AG04450 (cell line): ENCODE measurements at regions of chr17 and their contacts with region 1.

Region 1: DNA sequence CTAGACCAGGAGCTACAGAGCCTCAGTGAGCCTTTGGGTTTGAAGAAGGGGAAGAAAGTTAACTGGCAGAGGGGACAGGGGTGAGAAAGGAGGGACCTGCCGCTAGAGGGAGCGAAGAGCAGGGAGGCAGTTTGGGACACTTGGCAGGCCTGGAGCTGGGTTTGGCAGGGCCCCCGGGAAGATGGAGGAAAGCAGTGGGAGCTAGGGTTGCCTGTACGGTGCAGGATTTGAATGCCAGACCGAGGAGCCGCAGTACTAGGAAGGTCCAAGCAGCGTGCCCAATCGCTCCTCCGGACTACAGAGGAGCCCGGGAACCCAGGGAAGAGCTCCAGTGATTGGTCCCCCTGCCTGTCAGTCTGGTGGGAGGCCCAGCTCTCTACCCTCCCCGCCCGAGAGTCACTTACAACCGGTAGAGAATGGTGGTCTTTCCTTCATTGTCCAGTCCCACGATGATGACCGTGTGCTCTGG is 1.3 kb downstream of the ARL5C start:
- DNase-seq: peak; percentile 76
- H3K4me3 ChIP-seq: peak overlapping the region; percentile 63
- H3K27ac ChIP-seq: no peak overlapping the region
- H3K27me3 ChIP-seq: peaks cover 32% of the 10 kb centered on the region
- CTCF ChIP-seq: peak; percentile 87

Region 2: DNA sequence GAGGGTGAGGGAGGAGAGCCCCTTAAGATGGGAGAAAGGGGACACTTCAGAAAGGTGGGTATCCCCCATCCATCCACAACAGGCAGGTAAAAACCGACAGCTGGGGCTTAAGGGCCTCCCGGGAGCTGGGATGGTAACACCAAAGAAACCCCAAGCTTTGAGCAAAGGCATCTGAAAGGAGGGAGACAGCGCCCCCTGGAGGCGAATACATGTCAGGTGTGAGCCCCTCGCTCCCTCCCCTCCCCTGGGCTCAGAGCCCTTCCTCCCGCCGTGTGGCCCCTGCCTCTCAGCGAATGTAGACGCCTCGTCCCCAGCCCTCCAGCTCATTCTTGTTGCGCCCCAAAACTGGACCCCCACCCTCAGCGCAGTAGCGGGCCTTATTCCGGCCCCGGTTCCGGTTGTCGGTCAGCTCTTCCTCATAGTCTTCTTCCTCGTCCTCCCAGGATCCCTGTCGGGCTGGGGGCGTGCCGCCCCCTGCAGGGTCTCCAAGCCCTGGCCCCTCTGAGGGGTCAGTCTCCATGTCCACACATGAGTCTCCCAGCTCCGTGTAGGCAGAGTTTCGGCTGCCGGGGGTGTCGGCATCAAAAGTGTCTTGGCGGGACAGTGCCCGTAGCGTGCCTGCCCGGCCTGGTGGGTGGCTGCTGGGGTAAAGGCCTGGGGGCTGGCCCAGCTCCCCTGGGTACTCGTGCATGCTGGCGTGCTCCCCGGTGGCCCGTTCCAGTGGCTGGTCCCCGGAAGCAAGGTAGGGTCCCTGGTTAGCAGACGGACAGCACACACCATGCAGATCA is 10.4 kb after region 1 on chr17:
- CTCF ChIA-PET with region 1: interaction called, 54 read pairs
- POLR2A ChIA-PET with region 1: interaction called, 3 read pairs
- DNase-seq: no peak
- H3K4me3 ChIP-seq: no peak overlapping the region
- H3K27ac ChIP-seq: no peak overlapping the region
- H3K27me3 ChIP-seq: no peaks in the 10 kb centered on the region
- CTCF ChIP-seq: peak; percentile 78

Region 3: DNA sequence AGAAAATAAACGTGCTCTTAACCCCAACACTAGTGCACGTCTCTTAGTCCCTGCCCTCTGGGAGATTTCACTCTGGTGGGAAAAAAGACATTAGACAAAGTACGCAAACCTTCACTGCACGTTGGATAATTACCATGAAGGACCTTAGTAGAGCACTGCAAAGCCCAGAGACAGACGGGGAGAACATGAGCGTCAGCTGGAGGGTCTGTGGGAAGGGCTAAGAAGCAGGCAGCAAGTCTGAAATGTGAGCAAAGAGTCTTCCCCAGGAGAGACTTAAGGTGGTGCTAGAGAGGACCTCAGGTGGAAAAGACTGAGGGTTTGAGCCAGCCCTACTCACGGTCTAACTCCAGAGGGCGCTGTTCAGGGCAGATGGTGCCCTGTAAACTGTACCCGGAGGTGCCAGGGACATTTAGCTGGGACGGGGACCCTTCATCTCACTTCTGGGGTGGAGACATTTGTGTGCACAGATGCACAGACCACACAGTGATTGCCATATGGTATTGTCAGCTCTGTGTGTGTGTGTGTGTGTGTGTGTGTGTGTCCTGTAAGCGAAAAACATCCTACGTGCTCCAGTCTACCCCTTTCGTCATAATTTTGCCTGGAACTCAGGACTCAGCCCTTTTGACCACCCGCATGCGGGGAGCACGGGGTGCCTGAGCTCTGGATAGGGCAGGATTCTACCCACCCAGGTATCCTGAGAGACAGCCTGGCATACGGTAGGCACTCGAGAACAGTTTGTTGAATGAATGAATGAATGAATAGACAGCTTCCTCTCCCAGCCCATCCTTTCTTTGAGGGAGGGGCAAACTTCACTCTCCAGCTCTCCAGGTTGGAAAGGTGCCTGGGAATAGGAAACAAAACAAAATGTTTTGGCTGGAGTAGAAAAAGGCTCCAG is 71.1 kb after region 1 on chr17:
- CTCF ChIA-PET with region 1: interaction called, 17 read pairs
- POLR2A ChIA-PET with region 1: no interaction called
- DNase-seq: no peak
- H3K4me3 ChIP-seq: no peak overlapping the region
- H3K27ac ChIP-seq: no peak overlapping the region
- H3K27me3 ChIP-seq: no peaks in the 10 kb centered on the region
- CTCF ChIP-seq: peak; percentile 69

Region 4: DNA sequence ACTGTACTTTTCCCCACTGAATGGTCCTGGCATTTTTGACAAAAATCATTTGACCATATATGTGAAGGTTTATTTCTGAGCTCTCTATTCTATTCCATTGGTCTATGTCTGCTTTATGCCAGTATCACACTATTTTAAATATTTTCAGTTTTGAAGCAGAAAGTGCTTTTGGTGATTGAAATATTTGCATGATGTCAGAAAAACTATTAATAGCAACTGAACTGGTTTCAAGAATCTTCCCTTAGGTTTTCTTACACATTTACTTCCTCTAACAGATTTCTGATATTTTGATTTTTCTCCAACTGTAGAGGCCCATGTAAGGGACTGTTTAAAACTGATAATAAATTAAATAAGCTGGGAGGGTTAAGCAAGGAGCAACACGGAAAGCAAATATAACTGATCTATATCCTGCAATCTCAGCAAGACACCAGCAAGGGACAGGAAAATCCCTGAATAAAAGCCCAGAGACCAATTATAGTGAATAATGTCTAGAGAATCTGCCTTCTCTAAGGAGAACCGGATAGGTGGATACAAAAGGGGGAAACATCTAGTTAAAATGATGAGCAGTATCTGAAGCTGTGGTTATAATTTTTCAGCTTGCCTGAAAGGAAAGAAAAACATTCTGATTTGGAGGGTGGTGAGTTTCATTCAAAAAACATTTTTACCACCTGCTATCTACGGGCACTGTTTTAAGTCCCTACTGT is 142.0 kb after region 1 on chr17:
- CTCF ChIA-PET with region 1: no interaction called
- POLR2A ChIA-PET with region 1: no interaction called
- DNase-seq: no peak
- H3K4me3 ChIP-seq: no peak overlapping the region
- H3K27ac ChIP-seq: no peak overlapping the region
- H3K27me3 ChIP-seq: no peaks in the 10 kb centered on the region
- CTCF ChIP-seq: no peak